ENCODE measurements at regions of chr22 and their contacts with region 1.

Region 1: DNA sequence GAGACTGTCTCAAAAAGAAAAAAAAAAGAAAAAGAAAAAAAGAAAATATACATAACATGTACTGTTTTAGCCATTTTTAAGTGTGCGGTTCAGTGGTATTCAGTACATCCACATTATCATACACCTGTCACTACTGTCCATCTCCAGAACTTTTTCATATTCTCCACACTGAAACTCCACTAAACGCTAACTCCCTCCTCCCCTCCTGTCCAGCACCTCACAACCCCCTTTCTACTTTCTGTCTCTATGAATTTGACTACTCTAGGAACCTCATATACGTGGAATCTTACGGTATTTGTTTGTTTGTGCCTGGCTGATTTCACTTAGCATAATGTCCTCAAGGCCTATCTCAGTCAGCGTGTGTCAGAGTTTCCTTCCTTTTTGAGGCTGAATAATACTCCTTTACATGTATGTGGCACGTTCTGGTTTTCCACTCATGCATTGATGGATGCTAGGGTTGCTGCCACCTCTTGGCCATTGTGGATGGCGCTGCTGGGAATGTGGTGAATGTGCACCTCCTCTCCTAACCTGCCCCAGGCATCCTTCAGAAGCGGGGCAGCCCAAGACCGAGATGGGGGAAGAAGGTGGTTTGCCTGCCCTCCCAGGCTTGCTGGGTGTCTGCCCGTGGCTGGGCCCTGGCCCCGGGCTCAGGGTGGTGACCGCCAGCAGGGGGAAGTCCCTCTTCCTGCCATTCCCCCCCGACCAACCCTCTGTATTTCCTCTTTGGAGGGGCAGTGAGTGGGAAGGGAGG is 60.5 kb downstream of the BCR start:
- DNase-seq: peak; percentile 93
- H3K4me3 ChIP-seq: no peak overlapping the region
- H3K27ac ChIP-seq: peak overlapping the region; percentile 70
- H3K4me1 ChIP-seq: peaks cover 28% of the 10 kb centered on the region
- H3K27me3 ChIP-seq: no peaks in the 10 kb centered on the region
- CTCF ChIP-seq: peak; percentile 75 to 77
- POLR2A ChIP-seq: no peak

Region 2: GRCh38 chr22:23225724-23226496 is 14.9 kb before region 1 on chr22:
- CTCF ChIA-PET with region 1: interaction called, 10 read pairs
- POLR2A ChIA-PET with region 1: no interaction called
- dilution Hi-C with region 1: no loop called
- intact Hi-C with region 1: loop called (anchors 2 kb)
- DNase-seq: peak; percentile 85
- H3K4me3 ChIP-seq: no peak overlapping the region
- H3K27ac ChIP-seq: peak overlapping the region; percentile 87
- H3K4me1 ChIP-seq: peaks cover 62% of the 10 kb centered on the region
- H3K27me3 ChIP-seq: no peaks in the 10 kb centered on the region
- CTCF ChIP-seq: no peak
- POLR2A ChIP-seq: no peak

Region 3: GRCh38 chr22:23495614-23496444 is 255.0 kb after region 1 on chr22:
- CTCF ChIA-PET with region 1: no interaction called
- POLR2A ChIA-PET with region 1: no interaction called
- dilution Hi-C with region 1: no loop called
- intact Hi-C with region 1: no loop called
- DNase-seq: no peak
- H3K4me3 ChIP-seq: no peak overlapping the region
- H3K27ac ChIP-seq: no peak overlapping the region
- H3K4me1 ChIP-seq: no peaks in the 10 kb centered on the region
- H3K27me3 ChIP-seq: no peaks in the 10 kb centered on the region
- CTCF ChIP-seq: no peak
- POLR2A ChIP-seq: no peak